A549 (cell line): ENCODE measurements at regions of chr12 and their contacts with region 1.

Region 1: DNA sequence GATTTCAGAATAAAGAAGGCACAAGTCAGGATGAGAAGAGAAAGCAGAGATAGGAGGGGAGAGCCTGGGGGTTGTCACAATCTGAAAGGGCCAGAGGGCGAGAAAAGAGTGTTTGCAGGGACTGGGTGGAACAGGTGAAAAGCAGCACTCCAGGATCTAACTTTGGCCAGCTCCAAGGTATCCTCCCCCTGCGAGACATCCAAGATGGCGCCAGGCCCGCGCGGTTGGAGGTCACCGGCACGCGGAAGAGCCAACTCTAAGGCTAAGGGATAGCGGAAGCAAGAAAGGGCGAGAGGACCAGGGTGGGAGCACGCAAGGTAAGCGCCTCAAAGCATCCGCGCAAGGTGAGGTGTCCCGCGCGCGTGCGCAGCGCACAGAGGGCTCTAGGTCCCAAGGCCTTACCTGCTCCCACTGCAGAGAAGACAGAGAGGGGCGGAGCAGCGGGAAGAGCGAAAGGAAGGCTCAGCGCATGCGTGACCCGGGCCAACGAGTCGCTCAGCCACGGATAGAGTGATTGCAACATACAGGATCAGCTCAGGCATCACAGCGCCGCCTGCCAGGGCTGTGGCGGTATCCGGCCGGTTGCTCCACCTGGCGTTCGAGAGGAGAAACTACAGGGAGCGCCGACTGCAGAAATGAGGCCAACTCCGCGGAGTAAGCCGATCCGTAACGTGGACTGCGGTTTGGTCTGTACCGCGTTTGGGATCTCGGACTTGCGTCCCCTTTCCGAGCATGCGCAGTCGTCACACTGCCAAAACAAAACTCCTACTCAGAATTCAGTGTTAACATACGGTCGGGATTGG is at the start of gene ATP5MC2:
- DNase-seq: peak; percentile 98 to 100
- ATAC-seq: peak; percentile 96
- H3K4me3 ChIP-seq: peak within 1 kb of the TSS; percentile 70
- H3K27ac ChIP-seq: peak within 1 kb of the TSS; percentile 91 to 94
- H3K4me1 ChIP-seq: peaks cover 19% of the 10 kb centered on the region; the same call in 2 of the 3 replicates
- CTCF ChIP-seq: peak; percentile 99
- EP300 ChIP-seq: no peak
- POLR2A ChIP-seq: peak; percentile 92
- RAD21 ChIP-seq: peak; percentile 91 to 94
- polyA plus RNA-seq, gene ATP5MC2: 402 and 678 TPM in 2 replicates

Region 2: GRCh38 chr12:53344824-53345485 is 330.9 kb before region 1 on chr12:
- CTCF ChIA-PET with region 1: no interaction called
- POLR2A ChIA-PET with region 1: no interaction called
- DNase-seq: peak; percentile 68 to 76
- ATAC-seq: peak; percentile 87 to 88
- H3K4me3 ChIP-seq: peak overlapping the region; percentile 64
- H3K27ac ChIP-seq: peak overlapping the region; percentile 81 to 93
- H3K4me1 ChIP-seq: peaks cover 9% of the 10 kb centered on the region; the same call in 2 of the 3 replicates
- CTCF ChIP-seq: peak; percentile 74
- EP300 ChIP-seq: no peak
- POLR2A ChIP-seq: peak; percentile 59
- RAD21 ChIP-seq: peak; percentile 74 to 79

Region 3: DNA sequence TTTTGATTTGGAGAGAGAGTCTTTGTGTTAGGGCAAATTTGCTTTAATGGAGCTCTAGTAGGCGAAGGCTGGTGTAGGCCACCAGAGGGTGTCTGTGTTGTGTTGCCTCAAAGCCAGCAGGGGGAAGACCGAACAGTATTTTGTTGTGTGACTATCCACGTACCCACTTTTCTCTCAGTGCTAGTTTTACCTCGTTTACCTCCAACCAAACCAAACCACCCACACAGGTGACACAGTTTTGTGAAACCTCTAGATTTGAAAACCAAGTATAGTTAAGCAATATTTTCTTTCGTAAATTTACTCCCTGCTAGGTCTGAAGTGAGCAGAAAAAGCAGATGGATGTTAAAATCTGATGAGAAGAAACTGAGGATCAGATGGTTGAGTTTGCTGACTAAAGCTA is 132.3 kb before region 1 on chr12:
- CTCF ChIA-PET with region 1: interaction called, 148 read pairs
- POLR2A ChIA-PET with region 1: interaction called, 43 read pairs
- DNase-seq: peak; percentile 74 to 81
- ATAC-seq: peak; percentile 97 to 99
- H3K4me3 ChIP-seq: no peak overlapping the region
- H3K27ac ChIP-seq: peak overlapping the region; percentile 45 to 53
- H3K4me1 ChIP-seq: peaks cover 23% of the 10 kb centered on the region
- CTCF ChIP-seq: peak; percentile 93
- EP300 ChIP-seq: no peak
- POLR2A ChIP-seq: no peak
- RAD21 ChIP-seq: peak; percentile 92 to 94

Region 4: DNA sequence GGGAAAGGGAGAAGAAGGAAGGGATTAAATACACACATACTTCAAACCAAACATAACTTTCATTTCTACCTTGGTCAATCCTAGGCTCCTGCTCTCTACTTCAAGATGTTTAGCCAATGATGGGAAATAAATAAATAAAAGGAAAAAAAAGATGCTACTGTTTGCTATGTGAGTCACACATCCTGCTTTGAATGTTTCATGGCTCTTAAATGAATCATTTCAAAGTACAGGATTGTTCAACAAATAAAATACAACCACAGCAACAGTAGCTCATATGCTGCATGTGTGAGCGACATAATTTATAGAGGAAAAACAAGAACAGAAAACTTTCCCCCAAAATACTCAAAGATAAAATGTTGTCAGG is 114.3 kb before region 1 on chr12:
- CTCF ChIA-PET with region 1: interaction called, 12 read pairs
- POLR2A ChIA-PET with region 1: interaction called, 3 read pairs
- DNase-seq: peak; percentile 75 to 88
- ATAC-seq: peak; percentile 90 to 95
- H3K4me3 ChIP-seq: 0 out of 3 replicates have a peak overlapping the region, but pooled peaks have one; percentile 7
- H3K27ac ChIP-seq: peak overlapping the region; percentile 71 to 87
- H3K4me1 ChIP-seq: peaks cover 66% of the 10 kb centered on the region
- CTCF ChIP-seq: no peak
- EP300 ChIP-seq: no peak
- POLR2A ChIP-seq: no peak
- RAD21 ChIP-seq: 0 out of 5 replicates have a peak, but pooled peaks of 1 of the 2 experiments have one; percentile 4

Region 5: DNA sequence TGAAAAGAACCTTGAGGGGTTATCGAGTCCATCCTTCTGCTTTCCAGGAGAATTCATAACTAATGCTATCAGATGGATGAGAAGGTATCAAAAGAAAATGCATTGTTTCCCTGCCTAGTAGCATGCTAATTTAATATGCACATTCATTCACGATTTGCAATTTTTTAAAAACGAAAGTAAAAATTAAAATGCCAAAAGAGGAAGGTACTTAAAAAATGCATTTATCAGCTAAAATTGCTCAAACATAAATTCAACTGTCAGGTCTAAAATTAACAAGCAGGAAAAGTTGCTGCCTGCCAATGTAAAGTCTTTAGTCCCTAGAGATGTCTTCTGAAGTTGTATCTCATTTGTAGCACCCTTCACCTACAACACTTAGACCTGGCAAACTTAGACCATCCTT is 57.6 kb before region 1 on chr12:
- CTCF ChIA-PET with region 1: interaction called, 16 read pairs
- POLR2A ChIA-PET with region 1: interaction called, 10 read pairs
- DNase-seq: no peak
- ATAC-seq: no peak
- H3K4me3 ChIP-seq: no peak overlapping the region
- H3K27ac ChIP-seq: 0 out of 6 replicates have a peak overlapping the region, but pooled peaks of 1 of the 2 experiments have one; percentile 15
- H3K4me1 ChIP-seq: peaks cover 34% of the 10 kb centered on the region; the same call in 2 of the 3 replicates
- CTCF ChIP-seq: no peak
- EP300 ChIP-seq: no peak
- POLR2A ChIP-seq: no peak
- RAD21 ChIP-seq: no peak

Region 6: GRCh38 chr12:53652366-53652765 is 23.5 kb before region 1 on chr12:
- CTCF ChIA-PET with region 1: interaction called, 15 read pairs
- POLR2A ChIA-PET with region 1: interaction called, 4 read pairs
- DNase-seq: no peak
- ATAC-seq: no peak; a peak in 1 of 6 replicates
- H3K4me3 ChIP-seq: no peak overlapping the region
- H3K27ac ChIP-seq: no peak overlapping the region
- H3K4me1 ChIP-seq: peaks cover 3% of the 10 kb centered on the region; the same call in 1 of the 3 replicates
- CTCF ChIP-seq: no peak
- EP300 ChIP-seq: no peak
- POLR2A ChIP-seq: no peak
- RAD21 ChIP-seq: no peak

Region 7: GRCh38 chr12:53664936-53665335 is 10.9 kb before region 1 on chr12:
- CTCF ChIA-PET with region 1: interaction called, 9 read pairs
- POLR2A ChIA-PET with region 1: interaction called, 16 read pairs
- DNase-seq: no peak
- ATAC-seq: no peak; a peak in 1 of 6 replicates
- H3K4me3 ChIP-seq: no peak overlapping the region
- H3K27ac ChIP-seq: no peak overlapping the region
- H3K4me1 ChIP-seq: peaks cover 8% of the 10 kb centered on the region
- CTCF ChIP-seq: no peak
- EP300 ChIP-seq: no peak
- POLR2A ChIP-seq: no peak
- RAD21 ChIP-seq: no peak

Region 8: DNA sequence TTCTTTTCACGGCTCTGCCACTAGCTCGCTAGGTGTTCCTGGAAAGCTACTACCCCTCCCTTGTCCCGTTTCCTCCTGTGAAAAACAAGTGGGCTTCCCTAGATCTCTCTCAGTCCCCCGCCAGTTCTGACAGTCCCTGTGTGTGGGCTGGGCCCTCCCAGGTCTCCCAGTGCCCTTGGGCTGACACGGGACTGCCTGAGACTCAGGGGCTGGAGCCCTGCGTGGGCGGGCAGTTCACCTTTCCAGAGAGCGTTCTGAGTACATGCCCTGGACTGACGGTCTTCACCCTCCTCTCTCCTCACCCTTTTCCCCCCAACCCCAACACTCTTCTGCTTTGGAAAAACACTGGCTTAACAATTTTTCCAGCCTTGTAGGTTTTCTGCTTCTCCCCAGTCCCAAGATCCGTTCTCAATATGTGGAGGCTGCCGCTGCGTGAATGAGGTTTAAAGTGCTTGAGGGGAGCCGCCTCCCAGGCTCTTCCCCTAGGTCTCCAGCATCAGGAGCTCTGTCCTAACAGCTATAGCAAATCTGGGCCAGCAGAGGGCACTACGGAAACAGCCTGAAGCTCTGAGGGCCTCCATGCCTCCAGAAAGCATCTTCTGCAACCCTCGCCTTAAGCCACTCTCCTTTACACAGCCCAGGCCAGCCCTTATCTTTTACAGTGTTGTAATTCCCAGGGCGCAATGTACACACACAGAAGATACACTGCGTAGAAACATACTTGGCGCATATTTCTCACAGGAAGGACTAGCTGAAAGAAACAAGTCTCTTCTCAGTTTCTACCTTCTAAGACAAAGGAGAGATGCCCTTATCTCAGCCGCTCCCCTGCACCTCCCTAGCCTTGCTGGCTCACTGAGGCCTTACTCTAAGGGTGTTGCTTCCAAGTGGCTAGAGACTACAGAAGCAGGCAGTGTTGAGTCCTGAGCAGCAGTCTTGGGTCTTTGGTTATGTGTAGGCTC is 982.7 kb after region 1 on chr12:
- CTCF ChIA-PET with region 1: no interaction called
- POLR2A ChIA-PET with region 1: no interaction called
- DNase-seq: peak; percentile 62 to 63
- ATAC-seq: peak; percentile 68 to 95
- H3K4me3 ChIP-seq: no peak overlapping the region
- H3K27ac ChIP-seq: no peak overlapping the region
- H3K4me1 ChIP-seq: no peaks in the 10 kb centered on the region
- CTCF ChIP-seq: peak; percentile 37
- EP300 ChIP-seq: no peak
- POLR2A ChIP-seq: no peak
- RAD21 ChIP-seq: peak in 1 of 2 experiments; percentile 24; a peak in 1 of 5 replicates